SK-N-SH (cell line): ENCODE measurements at regions of chr4 and their contacts with region 1.

Region 1: GRCh38 chr4:17647927-17648326 is 33.5 kb downstream of the MED28 start:
- DNase-seq: no peak
- H3K4me3 ChIP-seq: no peak overlapping the region
- H3K27ac ChIP-seq: no peak overlapping the region
- H3K4me1 ChIP-seq: no peaks in the 10 kb centered on the region
- H3K27me3 ChIP-seq: no peaks in the 10 kb centered on the region
- CTCF ChIP-seq: no peak
- EP300 ChIP-seq: no peak
- RAD21 ChIP-seq: no peak

Region 2: GRCh38 chr4:17636696-17637622 is 11.0 kb before region 1 on chr4:
- CTCF ChIA-PET with region 1: interaction called, 10 read pairs
- POLR2A ChIA-PET with region 1: interaction called, 4 read pairs
- DNase-seq: peak; percentile 92
- H3K4me3 ChIP-seq: peak overlapping the region in 1 of 2 experiments; percentile 53; a peak in 1 of 4 replicates
- H3K27ac ChIP-seq: no peak overlapping the region
- H3K4me1 ChIP-seq: no peaks in the 10 kb centered on the region; a peak in 1 of 4 replicates
- H3K27me3 ChIP-seq: no peaks in the 10 kb centered on the region
- CTCF ChIP-seq: peak; percentile 92
- EP300 ChIP-seq: no peak
- RAD21 ChIP-seq: peak; percentile 81